ENCODE measurements at regions of chr14 and their contacts with region 1.

Region 1: GRCh38 chr14:23631702-23632460 is 4.3 kb upstream of the DHRS2 start:
- DNase-seq: peak; percentile 71
- ATAC-seq: peak; percentile 58
- H3K4me3 ChIP-seq: peak overlapping the region in 2 of 5 experiments; percentile 11 to 44
- H3K4me3 Mint-ChIP-seq: peak overlapping the region; percentile 4
- H3K27ac ChIP-seq: no peak overlapping the region
- H3K27ac Mint-ChIP-seq: no peak overlapping the region
- H3K4me1 ChIP-seq: peaks cover 3 to 7% of the 10 kb centered on the region in 2 donors
- H3K4me1 Mint-ChIP-seq: peaks cover 4% of the 10 kb centered on the region
- H3K27me3 ChIP-seq: peaks cover 0 to 12% (median 2%) of the 10 kb centered on the region in 4 experiments
- H3K27me3 Mint-ChIP-seq: peaks cover 20% of the 10 kb centered on the region
- CTCF ChIP-seq: peak; percentile 86

Region 2: GRCh38 chr14:23610090-23610814 is 21.6 kb before region 1 on chr14:
- CTCF ChIA-PET with region 1: interaction called, 15 read pairs
- POLR2A ChIA-PET with region 1: no interaction called
- intact Hi-C with region 1: no loop called
- DNase-seq: no peak
- ATAC-seq: no peak
- H3K4me3 ChIP-seq: no peak overlapping the region
- H3K4me3 Mint-ChIP-seq: no peak overlapping the region
- H3K27ac ChIP-seq: no peak overlapping the region
- H3K27ac Mint-ChIP-seq: no peak overlapping the region
- H3K4me1 ChIP-seq: peaks cover 0 to 3% of the 10 kb centered on the region in 2 donors
- H3K4me1 Mint-ChIP-seq: no peaks in the 10 kb centered on the region
- H3K27me3 ChIP-seq: no peaks in the 10 kb centered on the region
- H3K27me3 Mint-ChIP-seq: peaks cover 21% of the 10 kb centered on the region
- CTCF ChIP-seq: no peak

Region 3: DNA sequence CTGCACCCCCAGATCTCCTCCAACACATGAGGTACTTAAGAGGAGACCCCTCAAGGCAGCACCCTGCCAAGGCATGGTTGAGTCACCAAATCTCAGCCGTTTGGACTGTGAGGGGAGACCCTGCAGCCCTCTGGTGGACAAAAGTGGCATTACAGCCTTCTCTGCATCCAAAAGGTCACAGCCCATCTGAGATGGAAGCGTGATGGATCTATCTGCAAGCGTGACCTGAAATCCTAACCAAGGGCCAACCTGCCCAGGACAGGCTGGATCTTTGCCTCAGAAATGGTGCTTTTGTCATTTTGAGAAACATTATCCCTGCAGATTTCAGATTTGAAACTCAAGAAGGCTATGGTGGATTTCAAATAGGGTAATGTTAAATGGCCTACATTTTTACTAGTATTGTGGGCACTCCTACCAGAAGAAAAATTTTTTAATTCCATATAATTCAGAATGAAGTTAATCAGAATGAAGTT is 298.0 kb after region 1 on chr14:
- CTCF ChIA-PET with region 1: interaction called, 15 read pairs
- POLR2A ChIA-PET with region 1: no interaction called
- intact Hi-C with region 1: no loop called
- DNase-seq: peak; percentile 77
- ATAC-seq: peak; percentile 84
- H3K4me3 ChIP-seq: no peak overlapping the region
- H3K4me3 Mint-ChIP-seq: no peak overlapping the region
- H3K27ac ChIP-seq: no peak overlapping the region
- H3K27ac Mint-ChIP-seq: no peak overlapping the region
- H3K4me1 ChIP-seq: no peaks in the 10 kb centered on the region
- H3K4me1 Mint-ChIP-seq: no peaks in the 10 kb centered on the region
- H3K27me3 ChIP-seq: no peaks in the 10 kb centered on the region
- H3K27me3 Mint-ChIP-seq: peaks cover 5% of the 10 kb centered on the region
- CTCF ChIP-seq: peak; percentile 96

Region 4: DNA sequence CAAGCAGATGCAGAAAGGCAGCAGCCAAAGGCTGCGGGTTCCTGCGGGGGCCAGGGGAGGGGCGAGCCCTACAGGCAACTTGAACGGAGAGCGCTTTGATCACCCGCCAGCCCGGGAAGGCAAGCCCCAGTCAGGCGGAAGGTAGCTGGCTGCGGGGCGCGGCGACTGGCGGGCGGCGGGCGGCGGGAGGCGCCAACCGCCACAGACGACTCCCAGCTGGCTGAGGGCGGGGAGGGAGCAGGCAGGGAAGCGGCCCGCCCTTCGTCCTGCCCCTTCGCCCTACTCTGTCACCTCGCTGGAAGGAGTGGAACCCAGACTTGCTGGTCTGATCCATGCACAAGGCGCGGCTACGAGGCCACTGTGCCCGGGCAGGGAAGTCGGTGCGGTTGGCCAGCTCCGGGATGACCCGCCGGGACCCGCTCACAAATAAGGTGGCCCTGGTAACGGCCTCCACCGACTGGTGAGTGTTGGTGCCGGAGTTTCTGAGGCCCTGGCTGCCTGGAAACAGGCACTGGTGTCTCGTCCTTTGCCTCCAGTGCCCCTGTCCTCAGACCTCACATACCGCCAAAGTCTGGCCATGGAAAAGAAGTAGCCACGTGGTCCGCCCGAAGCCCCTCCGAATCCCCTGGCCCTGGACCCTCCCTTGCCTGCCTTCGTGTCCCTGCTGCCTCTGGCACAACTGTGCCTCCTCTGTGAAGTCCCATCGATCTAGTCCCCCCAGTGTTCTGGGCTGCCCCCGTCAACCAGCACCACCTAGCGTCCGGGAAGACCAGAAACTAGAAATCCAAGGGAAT is 404.5 kb after region 1 on chr14:
- CTCF ChIA-PET with region 1: interaction called, 3 read pairs
- POLR2A ChIA-PET with region 1: no interaction called
- intact Hi-C with region 1: loop called (anchors 5 kb)
- DNase-seq: peak; percentile 75
- ATAC-seq: peak; percentile 92
- H3K4me3 ChIP-seq: peak overlapping the region; percentile 34 to 77 (median 59)
- H3K4me3 Mint-ChIP-seq: peak overlapping the region; percentile 98
- H3K27ac ChIP-seq: peak overlapping the region; percentile 33 to 38
- H3K27ac Mint-ChIP-seq: peak overlapping the region; percentile 87
- H3K4me1 ChIP-seq: peaks cover 0 to 9% of the 10 kb centered on the region in 2 donors
- H3K4me1 Mint-ChIP-seq: peaks cover 10% of the 10 kb centered on the region
- H3K27me3 ChIP-seq: no peaks in the 10 kb centered on the region
- H3K27me3 Mint-ChIP-seq: no peaks in the 10 kb centered on the region
- CTCF ChIP-seq: peak; percentile 68

Measured in B cell (primary cell).